ENCODE measurements at regions of chr1 and their contacts with region 1.

Region 1: DNA sequence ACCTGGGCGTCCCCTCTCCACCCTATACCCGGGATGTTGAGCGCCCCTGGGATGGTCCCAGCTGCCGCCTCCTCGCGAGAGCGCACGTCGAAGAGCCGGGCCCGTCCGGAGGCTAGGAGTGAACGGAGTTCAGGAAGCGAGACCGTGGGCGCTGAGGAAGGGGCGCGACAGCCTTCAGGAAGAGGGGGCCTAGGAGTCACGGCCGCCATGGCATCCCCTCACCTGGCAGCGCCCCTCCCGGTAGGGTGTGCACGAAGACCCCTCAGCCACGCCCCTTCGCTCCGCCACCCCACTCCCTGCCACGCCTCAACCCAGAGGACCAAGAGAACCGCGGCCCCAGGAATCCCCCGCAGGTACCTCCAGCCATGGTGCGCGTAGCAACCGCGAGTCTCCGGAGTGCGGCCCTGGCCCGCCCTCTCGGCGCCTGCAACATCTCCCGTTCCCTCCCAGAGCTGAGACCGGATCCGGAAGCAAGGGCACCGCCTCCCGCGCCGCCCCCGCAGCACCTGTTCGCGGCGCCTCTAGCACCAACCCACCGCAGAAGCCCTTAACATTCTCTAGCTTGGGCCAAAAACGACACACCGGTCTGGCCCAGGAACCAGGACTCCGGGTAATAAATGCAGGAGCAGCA is at the start of gene TSTD1:
- DNase-seq: peak; percentile 93
- H3K4me3 Mint-ChIP-seq: peak within 1 kb of the TSS; percentile 91
- H3K27ac Mint-ChIP-seq: peak within 1 kb of the TSS; percentile 82
- H3K4me1 Mint-ChIP-seq: peaks cover 36% of the 10 kb centered on the region
- H3K27me3 Mint-ChIP-seq: no peaks in the 10 kb centered on the region
- total RNA-seq, gene TSTD1: 70.2 to 77.7 TPM

Region 2: DNA sequence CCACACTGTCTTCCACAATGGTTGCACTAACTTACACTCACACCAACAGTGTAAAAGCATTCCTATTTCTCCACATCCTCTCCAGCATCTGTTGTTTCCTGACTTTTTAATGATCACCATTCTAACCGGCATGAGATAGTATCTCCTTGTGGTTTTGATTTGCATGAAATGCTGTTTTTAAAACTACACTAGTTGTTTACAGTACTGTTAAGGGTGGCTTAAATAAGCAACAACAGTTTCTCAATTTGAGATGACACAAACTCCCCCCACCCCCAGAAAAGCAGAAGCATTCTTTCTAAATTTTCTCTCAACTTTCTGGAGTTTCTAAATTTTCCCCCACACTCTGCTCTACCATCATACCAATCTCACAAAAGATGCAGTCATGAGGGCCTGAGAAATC is 306.6 kb before region 1 on chr1:
- CTCF ChIA-PET with region 1: no interaction called
- POLR2A ChIA-PET with region 1: no interaction called
- intact Hi-C with region 1: no loop called
- DNase-seq: no peak
- H3K4me3 Mint-ChIP-seq: no peak overlapping the region
- H3K27ac Mint-ChIP-seq: no peak overlapping the region
- H3K4me1 Mint-ChIP-seq: peaks cover 33% of the 10 kb centered on the region
- H3K27me3 Mint-ChIP-seq: no peaks in the 10 kb centered on the region

Region 3: DNA sequence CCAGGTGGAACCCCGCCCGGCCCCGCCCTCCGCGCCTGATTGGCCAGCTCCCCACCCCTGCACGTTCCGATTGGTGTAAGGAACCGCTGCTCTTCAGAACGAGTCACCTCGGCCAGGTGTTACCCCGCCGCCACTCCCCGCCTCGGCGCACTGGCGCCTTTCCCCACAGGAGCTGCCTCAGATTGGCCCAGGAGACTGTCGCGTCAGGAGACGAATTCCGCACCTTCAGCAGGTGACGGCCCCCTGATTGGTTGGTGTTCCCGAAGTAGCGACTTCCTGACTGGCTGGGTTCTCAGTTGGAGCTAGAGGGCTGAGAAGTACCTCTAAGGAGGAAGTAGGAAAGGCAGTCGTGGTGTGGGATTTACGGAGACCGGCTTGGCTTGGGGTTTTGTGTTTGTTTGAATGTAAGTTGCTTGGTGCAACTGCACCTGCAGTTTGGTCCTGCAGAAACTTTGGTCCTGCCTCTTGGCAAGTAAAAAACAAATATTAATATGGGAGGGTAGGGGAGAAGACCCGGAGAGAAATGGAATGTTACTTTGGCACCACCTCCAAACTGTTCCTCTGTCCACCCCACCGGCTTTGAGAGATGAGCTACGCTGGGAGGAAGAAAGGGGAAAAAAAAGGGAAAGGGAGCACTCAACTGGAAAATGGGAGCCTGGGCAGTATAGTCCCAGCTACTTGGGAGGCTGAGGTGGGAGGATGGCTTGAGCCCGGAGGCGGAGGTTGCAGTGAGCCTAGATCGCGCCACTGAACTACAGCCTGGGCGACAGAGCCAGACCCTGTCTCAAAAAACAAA is 17.3 kb before region 1 on chr1:
- CTCF ChIA-PET with region 1: interaction called, 8 read pairs
- POLR2A ChIA-PET with region 1: interaction called, 6 read pairs
- intact Hi-C with region 1: loop called (anchors 2 kb)
- DNase-seq: peak; percentile 92
- H3K4me3 Mint-ChIP-seq: peak overlapping the region; percentile 86
- H3K27ac Mint-ChIP-seq: peak overlapping the region; percentile 82
- H3K4me1 Mint-ChIP-seq: peaks cover 51% of the 10 kb centered on the region
- H3K27me3 Mint-ChIP-seq: no peaks in the 10 kb centered on the region

Region 4: GRCh38 chr1:161054805-161055204 is 16.2 kb after region 1 on chr1:
- CTCF ChIA-PET with region 1: no interaction called
- POLR2A ChIA-PET with region 1: no interaction called
- intact Hi-C with region 1: no loop called
- DNase-seq: no peak
- H3K4me3 Mint-ChIP-seq: no peak overlapping the region
- H3K27ac Mint-ChIP-seq: no peak overlapping the region
- H3K4me1 Mint-ChIP-seq: peaks cover 13% of the 10 kb centered on the region
- H3K27me3 Mint-ChIP-seq: no peaks in the 10 kb centered on the region

Measured in activated CD4-positive, alpha-beta memory T cell treated with anti-CD3 and anti-CD28 coated beads for 36 hours (primary cell).